ENCODE measurements at regions of chr1 and their contacts with region 1.

Region 1: GRCh38 chr1:109426278-109427170 is at the start of gene PSMA5:
- DNase-seq: peak; percentile 100
- H3K4me3 Mint-ChIP-seq: peak within 1 kb of the TSS; percentile 95
- H3K27ac Mint-ChIP-seq: peak within 1 kb of the TSS; percentile 90
- H3K4me1 Mint-ChIP-seq: peaks cover 24% of the 10 kb centered on the region
- H3K27me3 Mint-ChIP-seq: no peaks in the 10 kb centered on the region
- CTCF ChIP-seq: no peak
- total RNA-seq, gene PSMA5: 109 and 113 TPM in 2 replicates

Region 2: GRCh38 chr1:109201123-109201703 is 225.3 kb before region 1 on chr1:
- CTCF ChIA-PET with region 1: interaction called, 3 read pairs
- POLR2A ChIA-PET with region 1: interaction called, 7 read pairs
- intact Hi-C with region 1: loop called (anchors 10 kb)
- DNase-seq: peak; percentile 93
- H3K4me3 Mint-ChIP-seq: no peak overlapping the region
- H3K27ac Mint-ChIP-seq: no peak overlapping the region
- H3K4me1 Mint-ChIP-seq: peaks cover 28% of the 10 kb centered on the region
- H3K27me3 Mint-ChIP-seq: no peaks in the 10 kb centered on the region
- CTCF ChIP-seq: peak; percentile 76

Region 3: GRCh38 chr1:109412551-109412950 is 14.0 kb before region 1 on chr1:
- CTCF ChIA-PET with region 1: interaction called, 4 read pairs
- POLR2A ChIA-PET with region 1: interaction called, 12 read pairs
- intact Hi-C with region 1: no loop called
- DNase-seq: no peak
- H3K4me3 Mint-ChIP-seq: no peak overlapping the region
- H3K27ac Mint-ChIP-seq: no peak overlapping the region
- H3K4me1 Mint-ChIP-seq: peaks cover 11% of the 10 kb centered on the region
- H3K27me3 Mint-ChIP-seq: no peaks in the 10 kb centered on the region
- CTCF ChIP-seq: no peak

Region 4: DNA sequence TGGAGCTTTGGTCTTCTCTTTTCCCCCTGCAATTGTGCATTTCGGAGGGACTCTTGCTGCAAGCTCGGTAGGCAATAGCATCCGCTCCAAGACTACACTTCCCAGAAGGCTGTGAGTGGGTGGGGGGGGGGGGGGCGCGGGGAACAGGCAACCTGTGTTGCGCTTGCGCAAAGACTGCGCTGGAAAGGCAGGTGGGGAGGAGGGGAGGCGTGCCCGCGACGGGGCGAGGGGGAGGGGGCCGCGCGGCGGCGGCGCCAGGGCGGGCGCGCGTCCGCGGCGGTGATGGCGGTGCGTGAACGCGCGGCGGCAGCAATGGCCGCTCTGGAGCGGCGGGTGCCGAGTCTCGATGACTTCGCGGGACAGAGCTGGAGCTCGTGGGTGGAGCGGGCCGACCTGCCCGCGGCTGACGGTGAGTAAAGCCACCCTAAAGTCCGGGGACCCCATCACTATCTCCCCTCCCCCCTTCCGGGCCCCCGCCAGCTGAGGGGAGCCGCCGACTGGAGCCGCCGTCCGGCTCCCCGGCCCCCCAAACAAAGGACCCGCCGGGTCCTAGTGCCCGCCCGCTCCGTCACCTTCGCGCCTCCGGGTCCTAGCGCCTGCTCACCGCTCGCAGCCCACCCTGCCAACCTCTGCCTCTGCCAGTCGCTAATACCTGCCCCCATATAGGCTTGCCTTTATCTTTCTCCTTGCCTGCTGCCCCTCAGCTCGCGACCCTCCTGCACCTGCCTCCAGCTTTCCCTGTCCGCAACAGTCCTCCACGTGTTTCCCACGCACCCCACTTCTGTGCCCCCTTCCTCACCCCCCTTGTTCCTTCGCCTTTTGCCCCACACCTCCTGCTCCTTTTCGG is 57.4 kb after region 1 on chr1 and contains the start of gene ATXN7L2:
- CTCF ChIA-PET with region 1: interaction called, 4 read pairs
- POLR2A ChIA-PET with region 1: interaction called, 14 read pairs
- intact Hi-C with region 1: no loop called
- DNase-seq: peak; percentile 89
- H3K4me3 Mint-ChIP-seq: peak within 1 kb of the TSS; percentile 83
- H3K27ac Mint-ChIP-seq: peak within 1 kb of the TSS; percentile 77
- H3K4me1 Mint-ChIP-seq: peaks cover 7% of the 10 kb centered on the region
- H3K27me3 Mint-ChIP-seq: peaks cover 24% of the 10 kb centered on the region
- CTCF ChIP-seq: no peak
- total RNA-seq, gene ATXN7L2: 3.8 and 7.3 TPM in 2 replicates

Region 5: GRCh38 chr1:109516872-109517271 is 90.3 kb after region 1 on chr1:
- CTCF ChIA-PET with region 1: no interaction called
- POLR2A ChIA-PET with region 1: no interaction called
- intact Hi-C with region 1: no loop called
- DNase-seq: no peak
- H3K4me3 Mint-ChIP-seq: no peak overlapping the region
- H3K27ac Mint-ChIP-seq: no peak overlapping the region
- H3K4me1 Mint-ChIP-seq: no peaks in the 10 kb centered on the region
- H3K27me3 Mint-ChIP-seq: peaks cover 11% of the 10 kb centered on the region
- CTCF ChIP-seq: no peak

Region 6: GRCh38 chr1:109783429-109783831 is 356.9 kb after region 1 on chr1:
- CTCF ChIA-PET with region 1: no interaction called
- POLR2A ChIA-PET with region 1: no interaction called
- intact Hi-C with region 1: no loop called
- DNase-seq: peak; percentile 91
- H3K4me3 Mint-ChIP-seq: no peak overlapping the region
- H3K27ac Mint-ChIP-seq: peak overlapping the region; percentile 81
- H3K4me1 Mint-ChIP-seq: peaks cover 31% of the 10 kb centered on the region
- H3K27me3 Mint-ChIP-seq: no peaks in the 10 kb centered on the region
- CTCF ChIP-seq: no peak